Lower leg skin (tissue), 4 donors: ENCODE measurements at regions of chr1 and their contacts with region 1.

Region 1: GRCh38 chr1:186722711-186723309 is 42.6 kb upstream of the PTGS2 start:
- DNase-seq: no peak
- H3K4me3 ChIP-seq: no peak overlapping the region
- CTCF ChIP-seq: no peak
- POLR2A ChIP-seq: no peak

Region 2: GRCh38 chr1:187956955-187957354 is 1234.1 kb after region 1 on chr1:
- intact Hi-C with region 1: loop called (anchors 5 kb)
- DNase-seq: no peak
- H3K4me3 ChIP-seq: no peak overlapping the region
- CTCF ChIP-seq: no peak
- POLR2A ChIP-seq: no peak